ENCODE measurements at regions of chr12 and their contacts with region 1.

Region 1: DNA sequence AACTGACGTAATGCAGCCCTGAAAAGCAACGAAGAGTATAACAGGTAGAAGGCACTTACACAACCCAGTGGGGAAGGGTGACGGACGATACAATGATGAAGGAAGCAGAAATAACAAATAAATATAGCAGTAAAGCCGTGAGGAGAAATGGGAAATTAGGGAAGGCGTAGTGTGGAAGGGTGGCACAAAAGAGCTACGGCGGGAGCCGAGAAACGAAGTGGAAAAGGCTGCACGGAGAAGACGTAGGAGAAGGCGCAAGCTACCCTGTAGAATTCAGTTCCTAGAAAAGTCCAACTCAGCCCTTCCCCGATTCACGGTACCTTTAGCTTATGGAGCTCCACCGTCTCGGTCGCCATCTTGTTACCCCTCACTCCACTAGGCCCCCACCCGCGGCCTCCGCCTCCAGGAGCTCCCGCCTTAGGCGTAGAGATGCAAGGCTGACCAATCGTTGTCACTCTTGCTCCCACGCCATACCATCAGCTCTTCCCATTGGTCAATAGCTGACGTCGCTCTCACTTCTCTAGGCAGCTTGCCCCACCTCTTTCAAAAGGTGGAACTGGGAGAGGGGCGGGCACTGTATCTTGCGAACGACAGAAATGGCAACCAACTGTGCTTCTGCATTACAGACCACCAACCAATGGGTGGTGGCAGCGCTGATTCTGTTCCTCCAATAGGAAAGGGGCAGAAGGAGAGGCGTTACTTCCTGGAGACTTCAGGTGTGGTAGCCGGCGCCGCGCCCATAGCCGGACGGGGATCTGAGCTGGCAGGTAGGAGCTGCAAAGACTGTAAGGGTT is at the starts of genes ORMDL2 and SARNP:
- DNase-seq: peak; percentile 97
- CTCF ChIP-seq: no peak

Region 2: DNA sequence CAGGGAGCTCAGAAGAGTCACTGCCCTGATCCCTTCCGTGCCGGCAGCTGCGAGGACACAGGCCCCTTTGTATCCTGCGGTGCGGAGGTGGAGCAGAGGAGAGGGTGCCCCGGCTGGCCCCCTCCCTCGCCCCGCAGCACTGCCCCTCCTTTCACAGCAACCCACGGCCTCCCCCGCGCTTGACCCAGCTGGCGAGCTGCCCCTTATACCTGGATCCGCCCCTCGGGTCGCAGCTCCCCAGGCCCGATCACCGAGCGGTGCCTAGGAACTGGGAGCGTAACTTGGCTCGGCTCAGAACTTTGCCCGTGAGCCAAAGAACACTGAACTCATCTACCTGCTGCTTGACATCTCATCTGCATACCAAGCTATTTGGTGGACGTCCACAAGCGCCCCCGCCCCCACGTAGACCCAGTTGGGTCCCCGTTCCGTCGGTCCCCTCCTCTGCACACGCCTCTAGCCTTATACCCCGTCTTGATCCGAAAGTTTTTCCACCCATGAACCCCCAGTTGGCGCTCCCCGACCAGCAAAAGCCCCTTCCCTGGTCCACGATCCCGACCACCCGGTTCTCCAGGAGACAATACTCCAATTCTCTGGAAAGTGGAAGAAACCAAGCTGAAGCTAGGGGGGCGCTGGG is 12.5 kb after region 1 on chr12:
- CTCF ChIA-PET with region 1: interaction called, 18 read pairs
- POLR2A ChIA-PET with region 1: interaction called, 41 read pairs
- DNase-seq: peak; percentile 51
- CTCF ChIP-seq: no peak

Region 3: GRCh38 chr12:55847603-55848291 is 30.2 kb after region 1 on chr12:
- CTCF ChIA-PET with region 1: no interaction called
- POLR2A ChIA-PET with region 1: no interaction called
- DNase-seq: no peak
- CTCF ChIP-seq: no peak

Region 4: DNA sequence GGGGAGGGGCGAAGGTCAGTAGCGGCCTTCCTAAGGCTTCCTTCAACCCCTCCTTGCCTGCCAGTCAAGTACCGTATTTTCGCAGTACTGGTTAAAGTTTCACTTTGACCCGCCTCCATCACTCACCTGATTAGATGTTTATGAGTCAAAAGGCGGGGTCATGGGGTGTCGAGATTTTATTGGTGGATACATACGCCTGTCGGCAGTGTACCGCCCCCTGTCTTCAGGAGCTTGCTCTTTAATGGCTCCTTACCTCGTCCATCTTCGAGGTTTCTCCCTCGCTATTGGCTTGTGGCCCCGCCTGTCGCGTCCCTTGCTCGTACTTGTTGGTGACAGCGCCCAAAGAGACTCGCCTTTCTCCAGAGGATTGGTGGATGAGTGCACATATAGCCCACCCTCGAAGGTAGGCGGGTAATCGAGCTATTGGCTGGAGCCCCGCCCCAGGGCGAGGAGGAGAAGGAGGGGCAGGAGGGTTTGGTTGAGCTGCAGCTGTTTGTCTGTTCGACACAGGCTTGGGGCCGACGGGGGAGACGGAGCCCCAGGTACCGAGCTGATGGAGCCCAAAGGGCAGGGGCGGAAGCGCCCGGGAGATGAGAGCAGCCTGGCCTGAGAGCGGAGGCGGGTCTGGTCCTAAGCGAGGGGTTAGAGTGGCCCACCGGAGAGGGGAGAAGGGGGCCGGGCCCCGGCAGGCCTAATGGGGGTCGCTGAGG is 156.2 kb after region 1 on chr12 and contains the start of gene RAB5B:
- CTCF ChIA-PET with region 1: interaction called, 3 read pairs
- POLR2A ChIA-PET with region 1: interaction called, 15 read pairs
- DNase-seq: peak; percentile 94
- CTCF ChIP-seq: no peak